ENCODE measurements at regions of chr17 and their contacts with region 1.

Region 1: DNA sequence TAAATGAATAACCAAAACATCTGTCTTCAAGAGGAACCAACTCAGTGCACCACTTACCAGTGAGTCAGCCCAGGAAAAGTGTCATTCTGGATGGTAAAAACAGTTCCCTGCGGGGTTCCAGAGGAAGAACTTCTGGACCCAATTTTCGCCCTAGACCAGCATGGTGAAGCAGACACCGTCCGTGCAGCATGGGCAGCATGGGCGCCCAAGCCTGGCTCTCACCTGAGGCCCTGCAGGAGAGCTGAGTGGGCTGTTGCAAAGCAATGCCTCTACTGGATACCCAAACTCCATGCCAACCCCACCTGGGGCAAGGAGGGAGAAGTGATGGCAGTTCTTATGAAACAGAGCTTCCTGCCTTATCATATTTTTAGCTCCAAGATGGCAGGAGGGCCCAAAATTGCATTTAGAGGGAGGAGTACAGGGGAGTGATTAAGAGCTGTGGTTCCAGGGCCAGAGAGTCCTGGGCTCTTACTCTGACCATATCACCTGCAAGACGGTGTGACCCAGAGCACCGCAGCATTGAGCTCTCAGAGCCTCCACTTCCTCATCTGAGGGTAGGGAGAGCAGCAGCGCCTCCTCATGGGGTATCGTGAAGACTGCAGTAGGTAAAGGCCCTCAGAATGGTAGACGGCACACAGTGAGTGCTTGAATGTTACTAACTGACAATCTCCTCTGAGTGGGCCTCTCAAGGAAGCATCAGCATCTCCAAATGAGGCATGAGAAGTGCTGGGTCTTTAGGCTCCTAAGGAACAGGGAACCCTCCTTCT is 16.6 kb upstream of the INPP5K start:
- DNase-seq: no peak
- H3K4me3 ChIP-seq: no peak overlapping the region
- H3K27ac ChIP-seq: no peak overlapping the region
- H3K4me1 ChIP-seq: no peaks in the 10 kb centered on the region
- H3K27me3 ChIP-seq: no peaks in the 10 kb centered on the region
- CTCF ChIP-seq: peak; percentile 32 to 49
- POLR2A ChIP-seq: no peak

Region 2: DNA sequence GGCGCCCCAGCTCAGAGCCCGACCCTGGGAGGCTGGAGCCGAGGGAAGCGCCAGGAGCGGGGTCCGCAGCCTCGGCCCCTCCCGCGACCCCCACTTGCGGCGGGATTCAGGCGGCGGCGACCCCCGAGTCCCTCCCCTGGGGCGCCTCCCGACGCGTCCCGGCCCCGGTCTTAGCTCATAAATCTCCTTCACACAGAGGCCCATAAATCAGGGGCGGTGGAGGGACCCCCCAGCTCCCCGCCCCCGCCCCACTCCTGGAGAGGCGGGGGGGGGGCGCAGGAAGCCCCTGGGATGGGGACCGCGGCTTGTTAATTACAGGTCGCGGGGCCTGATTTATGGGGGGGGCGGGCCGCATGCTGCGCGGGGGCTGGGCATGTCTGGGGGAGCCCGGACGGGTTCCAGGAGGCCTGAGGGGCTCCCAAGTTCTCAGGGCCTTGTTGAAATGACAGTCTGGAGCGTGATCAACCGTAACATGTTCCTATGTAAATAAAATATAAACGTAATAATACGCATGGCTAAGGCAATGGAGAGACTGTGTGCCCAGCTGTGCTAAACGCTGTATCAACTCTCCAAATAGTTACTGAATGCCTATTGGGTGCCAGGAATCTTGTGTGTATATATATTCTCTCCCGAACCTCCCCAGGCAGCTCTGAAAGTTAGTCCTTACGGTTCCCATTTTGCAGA is 272.8 kb before region 1 on chr17:
- CTCF ChIA-PET with region 1: interaction called, 11 read pairs
- POLR2A ChIA-PET with region 1: no interaction called
- dilution Hi-C with region 1: no loop called
- intact Hi-C with region 1: no loop called
- DNase-seq: no peak
- H3K4me3 ChIP-seq: peak overlapping the region in 2 of 3 experiments; percentile 31 to 32
- H3K27ac ChIP-seq: no peak overlapping the region
- H3K4me1 ChIP-seq: no peaks in the 10 kb centered on the region
- H3K27me3 ChIP-seq: peaks cover 2 to 3% of the 10 kb centered on the region in 2 experiments
- CTCF ChIP-seq: no peak
- POLR2A ChIP-seq: no peak

Region 3: GRCh38 chr17:1275962-1276736 is 256.9 kb before region 1 on chr17:
- CTCF ChIA-PET with region 1: interaction called, 3 read pairs
- POLR2A ChIA-PET with region 1: no interaction called
- dilution Hi-C with region 1: no loop called
- intact Hi-C with region 1: loop called (anchors 5 kb)
- DNase-seq: peak; percentile 30
- H3K4me3 ChIP-seq: no peak overlapping the region
- H3K27ac ChIP-seq: no peak overlapping the region
- H3K4me1 ChIP-seq: no peaks in the 10 kb centered on the region
- H3K27me3 ChIP-seq: peaks cover 8 to 11% of the 10 kb centered on the region in 2 experiments
- CTCF ChIP-seq: peak; percentile 50 to 90
- POLR2A ChIP-seq: no peak

Region 4: GRCh38 chr17:1509290-1509881 is 23.6 kb before region 1 on chr17:
- CTCF ChIA-PET with region 1: no interaction called
- POLR2A ChIA-PET with region 1: no interaction called
- dilution Hi-C with region 1: no loop called
- intact Hi-C with region 1: no loop called
- DNase-seq: no peak
- H3K4me3 ChIP-seq: no peak overlapping the region
- H3K27ac ChIP-seq: no peak overlapping the region
- H3K4me1 ChIP-seq: peaks cover 25% of the 10 kb centered on the region
- H3K27me3 ChIP-seq: no peaks in the 10 kb centered on the region
- CTCF ChIP-seq: no peak
- POLR2A ChIP-seq: no peak